Esophagus muscularis mucosa (tissue), 4 donors: ENCODE measurements at regions of chr7 and their contacts with region 1.

Region 1: GRCh38 chr7:107725151-107725740 is 18.7 kb upstream of the CBLL1 start:
- DNase-seq: no peak
- H3K4me3 ChIP-seq: no peak overlapping the region
- H3K27ac ChIP-seq: no peak overlapping the region
- H3K4me1 ChIP-seq: no peaks in the 10 kb centered on the region
- H3K27me3 ChIP-seq: peaks cover 0 to 9% (median 0%) of the 10 kb centered on the region in 4 donors
- CTCF ChIP-seq: peak; percentile 60 to 66 (median 61)
- EP300 ChIP-seq: no peak
- POLR2A ChIP-seq: no peak

Region 2: DNA sequence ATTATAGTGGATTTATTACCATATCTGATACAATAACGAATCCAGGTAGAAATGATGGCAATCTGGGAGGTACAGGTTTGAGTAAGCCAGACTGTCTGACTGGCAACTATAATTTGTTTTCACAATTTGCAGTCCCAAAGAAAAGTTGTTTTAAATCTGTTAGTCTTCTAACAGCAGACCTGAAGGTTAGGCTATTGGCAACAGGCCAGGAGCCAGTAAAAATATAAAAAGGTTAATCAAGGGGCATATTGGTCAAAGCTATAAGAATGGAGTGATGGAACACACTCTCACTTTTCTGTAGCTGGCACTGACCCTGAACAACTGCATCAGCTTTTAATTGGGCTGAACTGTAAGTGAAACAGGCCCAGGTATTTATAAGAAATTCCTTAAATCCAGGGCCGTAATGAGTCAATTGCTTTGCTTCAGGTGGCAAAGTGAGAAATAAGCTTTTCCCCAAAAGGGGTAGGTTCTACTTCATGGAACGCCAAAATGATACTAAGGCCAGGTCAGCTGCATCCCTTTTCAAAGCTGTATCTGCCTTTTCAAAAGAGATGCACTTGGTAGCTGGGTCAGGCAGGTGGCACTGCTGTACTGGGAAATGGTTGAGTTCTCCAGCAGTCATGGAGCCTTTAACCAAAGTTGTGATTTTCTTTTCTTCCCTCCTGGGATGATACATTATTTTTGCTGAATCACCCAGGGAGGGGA is 262.4 kb before region 1 on chr7:
- intact Hi-C with region 1: loop called (anchors 2 kb)
- DNase-seq: no peak
- H3K4me3 ChIP-seq: no peak overlapping the region
- H3K27ac ChIP-seq: no peak overlapping the region
- H3K4me1 ChIP-seq: peaks cover 0 to 5% (median 0%) of the 10 kb centered on the region in 4 donors
- H3K27me3 ChIP-seq: no peaks in the 10 kb centered on the region
- CTCF ChIP-seq: peak; percentile 77 to 78 (median 77)
- EP300 ChIP-seq: no peak
- POLR2A ChIP-seq: no peak

Region 3: DNA sequence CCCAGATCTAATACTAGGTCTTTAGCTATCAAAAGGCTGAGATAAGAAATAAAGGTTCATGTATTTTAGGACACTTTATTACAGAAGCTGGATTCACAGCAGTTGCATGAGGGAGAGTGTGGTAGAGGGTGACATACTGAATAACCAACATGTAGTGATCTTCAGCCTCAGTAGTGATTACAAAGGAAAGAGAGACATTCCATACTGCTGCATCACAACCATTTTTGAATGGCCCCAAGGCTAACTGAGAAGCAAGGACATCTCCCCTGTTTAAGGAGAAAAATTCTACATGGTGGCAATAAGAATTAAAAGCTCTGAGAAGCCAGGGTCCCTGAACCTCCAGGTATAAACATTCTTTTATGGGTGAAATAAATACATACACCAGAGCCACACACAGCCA is 196.8 kb before region 1 on chr7:
- intact Hi-C with region 1: no loop called
- DNase-seq: no peak
- H3K4me3 ChIP-seq: no peak overlapping the region
- H3K27ac ChIP-seq: no peak overlapping the region
- H3K4me1 ChIP-seq: peaks cover 0 to 4% (median 0%) of the 10 kb centered on the region in 4 donors
- H3K27me3 ChIP-seq: no peaks in the 10 kb centered on the region
- CTCF ChIP-seq: no peak
- EP300 ChIP-seq: no peak
- POLR2A ChIP-seq: no peak

Region 4: DNA sequence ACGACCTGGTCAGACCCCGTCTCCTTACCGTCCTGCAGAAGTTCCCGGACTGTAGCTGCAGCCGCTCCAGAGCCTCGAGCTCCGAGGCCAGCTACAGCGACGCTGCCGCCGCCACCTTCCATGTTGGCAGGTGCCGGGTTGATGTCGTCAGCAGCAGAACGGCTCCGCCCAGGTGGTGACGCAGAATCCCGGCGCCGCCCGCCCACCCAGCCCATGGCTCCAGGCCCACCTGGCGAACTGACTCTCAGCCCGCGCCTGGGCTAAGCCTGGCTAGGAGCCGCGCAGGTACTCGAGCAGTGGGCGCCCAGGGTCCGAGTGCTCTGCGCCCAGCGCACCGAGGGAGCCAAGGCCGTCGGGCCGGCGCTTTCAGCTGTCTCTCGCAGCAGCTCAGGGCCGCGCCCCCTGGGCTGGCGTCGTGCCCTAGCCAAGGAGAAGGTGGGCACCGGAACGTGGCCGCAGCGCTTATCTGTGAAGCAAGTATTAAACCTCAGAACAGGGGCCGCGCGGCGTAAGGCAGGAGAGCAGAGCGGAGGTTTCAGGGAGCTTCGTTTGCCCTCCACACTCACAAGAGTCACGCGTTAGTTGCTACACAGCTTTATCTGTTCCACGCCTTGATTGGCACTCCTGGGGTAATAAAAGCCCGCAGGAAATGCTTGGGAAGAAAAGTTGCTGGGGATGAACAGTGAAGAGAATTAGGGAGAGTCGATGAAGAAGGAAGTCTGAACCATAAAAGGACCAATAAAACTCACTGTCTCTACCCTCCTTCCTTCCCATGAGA is 161.3 kb before region 1 on chr7 and contains the starts of genes COG5 and DUS4L:
- intact Hi-C with region 1: loop called (anchors 10 kb)
- DNase-seq: peak; percentile 93
- H3K4me3 ChIP-seq: peak within 1 kb of the TSS; percentile 90 to 97 (median 94)
- H3K27ac ChIP-seq: peak within 1 kb of the TSS; percentile 92 to 96 (median 94)
- H3K4me1 ChIP-seq: peaks cover 30 to 53% (median 44%) of the 10 kb centered on the region in 4 donors
- H3K27me3 ChIP-seq: no peaks in the 10 kb centered on the region
- CTCF ChIP-seq: no peak
- EP300 ChIP-seq: no peak
- POLR2A ChIP-seq: peak; percentile 10
- total RNA-seq, gene COG5: 20.3 to 33.4 (median 24.9) TPM
- total RNA-seq, gene DUS4L: 3.6 to 7.5 (median 6.6) TPM

Region 5: DNA sequence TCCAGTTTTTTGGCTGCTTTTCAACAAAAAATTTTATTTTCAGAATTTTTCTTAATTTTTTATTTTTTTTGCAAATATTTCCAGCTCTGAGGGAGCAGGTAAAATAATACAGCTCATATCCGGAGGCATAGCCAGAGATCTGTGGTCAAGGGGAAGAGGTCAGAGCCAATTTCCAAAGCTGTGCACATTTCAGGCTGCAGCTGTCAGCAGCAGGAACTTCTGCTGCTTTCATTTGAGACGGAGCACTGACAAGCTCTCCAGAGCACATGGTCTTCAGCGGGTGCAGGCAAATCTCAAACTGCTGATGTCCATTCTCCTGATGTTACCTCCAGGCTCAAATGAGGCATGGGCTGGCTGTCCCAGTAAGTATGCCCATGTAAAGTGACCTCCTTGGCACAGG is 33.5 kb before region 1 on chr7:
- intact Hi-C with region 1: no loop called
- DNase-seq: peak; percentile 47
- H3K4me3 ChIP-seq: no peak overlapping the region
- H3K27ac ChIP-seq: no peak overlapping the region
- H3K4me1 ChIP-seq: peaks cover 5 to 23% (median 15%) of the 10 kb centered on the region in 4 donors
- H3K27me3 ChIP-seq: no peaks in the 10 kb centered on the region
- CTCF ChIP-seq: no peak
- EP300 ChIP-seq: no peak
- POLR2A ChIP-seq: no peak

Region 6: DNA sequence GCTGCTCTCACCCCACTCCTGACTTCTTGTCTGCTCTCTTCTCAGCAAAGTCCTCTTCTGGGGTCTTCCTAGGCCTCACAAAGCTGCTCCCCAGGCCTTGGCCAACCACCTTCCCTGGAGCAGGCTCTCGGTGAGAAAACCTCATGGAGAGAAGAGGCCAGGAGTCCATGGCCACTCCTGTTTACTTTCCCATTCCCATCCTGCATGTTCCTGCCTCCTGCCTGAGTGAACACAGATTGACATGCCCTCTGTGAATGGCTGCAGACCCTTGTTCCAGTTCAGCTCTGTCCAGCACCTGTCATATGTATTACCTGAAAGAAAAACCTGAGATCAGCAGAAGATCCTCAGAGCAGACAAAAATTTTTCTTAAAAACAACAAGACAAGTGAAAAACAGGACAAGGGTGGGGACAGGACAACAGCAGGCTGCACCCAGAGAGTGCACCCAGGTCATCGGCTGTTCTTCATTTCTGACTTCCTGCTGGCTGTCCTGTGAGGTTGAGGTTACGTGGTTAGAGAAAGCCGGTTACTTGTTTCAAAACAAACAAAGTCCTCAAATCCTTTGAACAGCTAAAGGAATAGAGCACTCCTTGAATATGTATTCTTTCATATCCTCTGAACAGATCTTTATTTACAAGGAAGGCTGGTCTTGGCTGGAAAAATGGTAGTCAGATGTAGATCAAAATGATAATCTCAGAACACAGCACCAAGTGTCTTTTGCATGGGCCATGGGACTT is 131.7 kb after region 1 on chr7:
- intact Hi-C with region 1: no loop called
- DNase-seq: no peak
- H3K4me3 ChIP-seq: no peak overlapping the region
- H3K27ac ChIP-seq: no peak overlapping the region
- H3K4me1 ChIP-seq: peaks cover 0 to 3% (median 0%) of the 10 kb centered on the region in 4 donors
- H3K27me3 ChIP-seq: no peaks in the 10 kb centered on the region
- CTCF ChIP-seq: no peak
- EP300 ChIP-seq: no peak
- POLR2A ChIP-seq: no peak